GM10248 (cell line): ENCODE measurements at regions of chr15 and their contacts with region 1.

Region 1: DNA sequence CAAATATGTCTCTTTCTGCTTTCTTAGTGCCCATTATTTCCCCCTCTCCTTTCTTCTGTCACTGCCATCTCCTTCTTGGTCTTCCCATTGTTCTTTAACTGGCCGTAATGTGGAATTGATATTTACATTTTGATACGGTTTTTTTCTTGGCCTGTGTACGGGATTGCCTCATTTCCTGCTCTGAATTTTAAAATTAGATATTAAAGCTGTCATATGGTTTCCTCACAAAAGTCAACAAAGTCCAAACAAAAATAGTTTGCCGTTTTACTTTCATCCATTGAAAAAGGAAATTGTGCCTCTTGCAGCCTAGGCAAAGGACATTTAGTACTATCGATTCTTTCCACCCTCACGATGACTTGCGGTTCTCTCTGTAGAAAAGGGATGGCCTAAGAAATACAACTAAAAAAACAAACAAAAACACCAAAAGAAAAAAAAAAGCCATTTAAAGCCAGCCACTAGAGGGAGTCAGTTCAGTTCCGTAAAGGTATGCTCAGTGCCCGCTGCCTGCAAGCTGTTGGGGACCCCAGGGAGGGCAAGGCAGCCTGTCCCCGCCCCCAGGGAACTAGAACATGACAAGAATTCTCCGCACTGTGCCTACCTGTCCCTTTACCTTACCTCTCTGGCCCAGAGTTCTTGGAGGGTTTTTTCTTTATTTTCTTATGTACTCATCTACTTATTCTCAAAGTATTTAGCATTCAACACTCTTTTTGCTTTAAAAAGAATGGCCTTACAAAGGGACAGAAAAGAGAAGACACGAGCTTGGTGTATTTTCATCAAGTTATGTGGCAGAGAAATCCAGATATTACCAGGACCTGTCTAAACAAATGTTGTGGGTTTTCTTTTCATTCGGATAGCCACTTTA is 30.0 kb upstream of the NR2E3 start:
- DNase-seq: peak; percentile 74
- CTCF ChIP-seq: peak; percentile 67

Region 2: GRCh38 chr15:71515375-71516186 is 264.8 kb before region 1 on chr15:
- CTCF ChIA-PET with region 1: no interaction called
- POLR2A ChIA-PET with region 1: no interaction called
- DNase-seq: no peak
- CTCF ChIP-seq: no peak

Region 3: GRCh38 chr15:71752604-71753289 is 27.6 kb before region 1 on chr15:
- CTCF ChIA-PET with region 1: interaction called, 34 read pairs
- POLR2A ChIA-PET with region 1: no interaction called
- DNase-seq: peak; percentile 44
- CTCF ChIP-seq: peak; percentile 44

Region 4: GRCh38 chr15:71792521-71792920 is 12.2 kb after region 1 on chr15:
- CTCF ChIA-PET with region 1: interaction called, 16 read pairs
- POLR2A ChIA-PET with region 1: no interaction called
- DNase-seq: no peak
- CTCF ChIP-seq: no peak

Region 5: GRCh38 chr15:72353265-72353664 is 572.9 kb after region 1 on chr15:
- CTCF ChIA-PET with region 1: no interaction called
- POLR2A ChIA-PET with region 1: no interaction called
- DNase-seq: no peak
- CTCF ChIP-seq: no peak